ENCODE measurements at regions of chr9 and their contacts with region 1.

Region 1: DNA sequence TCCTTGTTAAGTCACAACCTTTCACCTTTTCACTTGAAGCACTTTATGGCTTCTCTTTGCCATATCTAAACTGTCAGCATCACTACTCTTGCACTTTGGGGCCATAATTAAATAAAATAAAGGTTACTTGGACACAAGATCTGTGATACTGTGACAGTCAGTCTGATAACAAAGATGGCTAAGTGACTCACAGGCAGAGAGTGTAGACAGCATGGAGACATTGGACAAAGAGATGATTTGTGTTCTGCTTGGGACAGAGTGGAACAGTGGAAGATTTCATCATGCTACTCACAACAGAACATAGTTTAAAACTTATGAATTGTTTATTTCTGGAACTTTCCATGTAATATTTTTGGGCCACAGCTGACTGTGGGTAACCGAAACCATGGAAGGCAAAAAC is 81.7 kb upstream of the SMC5 start:
- DNase-seq: no peak
- ATAC-seq: no peak
- H3K4me3 ChIP-seq: no peak overlapping the region
- H3K27ac ChIP-seq: no peak overlapping the region
- H3K4me1 ChIP-seq: no peaks in the 10 kb centered on the region
- H3K27me3 ChIP-seq: no peaks in the 10 kb centered on the region
- CTCF ChIP-seq: no peak
- POLR2A ChIP-seq: no peak

Region 2: GRCh38 chr9:70111042-70111602 is 66.0 kb before region 1 on chr9:
- in situ Hi-C with region 1: no loop called
- intact Hi-C with region 1: no loop called
- DNase-seq: peak; percentile 57 to 68
- ATAC-seq: peak; percentile 74 to 90
- H3K4me3 ChIP-seq: no peak overlapping the region
- H3K27ac ChIP-seq: peak overlapping the region in 1 of 4 donors; percentile 0
- H3K4me1 ChIP-seq: peaks cover 0 to 10% of the 10 kb centered on the region in 2 donors
- H3K27me3 ChIP-seq: no peaks in the 10 kb centered on the region
- CTCF ChIP-seq: peak; percentile 52 to 82 (median 78)
- POLR2A ChIP-seq: no peak

Region 3: DNA sequence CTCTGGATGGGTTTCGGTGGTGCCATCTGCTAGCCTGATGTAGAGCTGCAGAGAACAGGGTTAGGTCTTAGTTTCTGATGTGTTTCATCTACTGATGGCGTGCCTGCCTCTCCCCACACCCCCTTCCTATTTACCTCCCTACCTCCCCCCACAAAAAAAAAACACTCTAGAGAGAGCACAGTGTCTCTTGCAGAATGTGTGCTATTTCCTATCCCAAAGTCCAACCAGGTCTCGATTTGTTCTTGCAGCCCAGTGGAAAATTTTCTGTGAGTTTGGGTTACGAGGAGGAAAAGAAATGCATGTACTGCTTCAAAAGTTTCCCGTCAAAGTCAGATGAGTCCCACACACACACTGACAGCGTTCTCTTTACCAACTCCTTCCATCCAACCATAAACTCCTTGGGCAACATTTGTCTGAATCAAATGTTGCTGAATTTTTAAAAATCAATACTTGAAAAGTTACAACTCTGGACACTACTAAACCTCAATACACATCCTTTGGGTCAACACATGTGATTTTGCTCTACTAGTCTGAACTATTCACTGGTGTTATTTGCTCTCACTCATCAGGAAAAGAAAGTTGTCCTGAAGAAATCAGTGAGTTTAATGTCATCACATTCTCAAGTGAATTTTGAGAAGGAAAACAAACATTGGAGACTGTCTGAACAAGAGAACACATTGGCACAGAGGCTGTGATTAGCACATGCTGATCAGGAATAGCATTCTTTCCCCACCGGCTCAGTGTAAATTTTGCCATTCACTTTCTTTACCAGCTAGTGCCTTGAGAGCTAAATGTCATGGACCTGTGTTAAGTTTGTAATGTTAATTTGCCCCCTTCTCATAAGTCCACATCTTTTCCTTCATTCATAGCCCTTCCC is 49.3 kb before region 1 on chr9:
- in situ Hi-C with region 1: loop called in 1 of 4 experiments (anchors 5 kb)
- intact Hi-C with region 1: no loop called
- DNase-seq: no peak
- ATAC-seq: no peak
- H3K4me3 ChIP-seq: no peak overlapping the region
- H3K27ac ChIP-seq: no peak overlapping the region
- H3K4me1 ChIP-seq: peaks cover 11 to 26% of the 10 kb centered on the region in 2 donors
- H3K27me3 ChIP-seq: no peaks in the 10 kb centered on the region
- CTCF ChIP-seq: no peak
- POLR2A ChIP-seq: no peak

Region 4: GRCh38 chr9:70255486-70255885 is 78.4 kb after region 1 on chr9:
- in situ Hi-C with region 1: no loop called
- intact Hi-C with region 1: no loop called
- DNase-seq: no peak
- ATAC-seq: no peak
- H3K4me3 ChIP-seq: no peak overlapping the region
- H3K27ac ChIP-seq: no peak overlapping the region
- H3K4me1 ChIP-seq: peaks cover 18% of the 10 kb centered on the region in 2 donors
- H3K27me3 ChIP-seq: no peaks in the 10 kb centered on the region
- CTCF ChIP-seq: no peak
- POLR2A ChIP-seq: no peak

Region 5: GRCh38 chr9:71157731-71158130 is 980.6 kb after region 1 on chr9:
- in situ Hi-C with region 1: no loop called
- intact Hi-C with region 1: no loop called
- DNase-seq: no peak
- ATAC-seq: no peak
- H3K4me3 ChIP-seq: no peak overlapping the region
- H3K27ac ChIP-seq: no peak overlapping the region
- H3K4me1 ChIP-seq: no peaks in the 10 kb centered on the region
- H3K27me3 ChIP-seq: no peaks in the 10 kb centered on the region
- CTCF ChIP-seq: no peak
- POLR2A ChIP-seq: no peak